GM12878 (cell line): ENCODE measurements at regions of chrX and their contacts with region 1.

Region 1: DNA sequence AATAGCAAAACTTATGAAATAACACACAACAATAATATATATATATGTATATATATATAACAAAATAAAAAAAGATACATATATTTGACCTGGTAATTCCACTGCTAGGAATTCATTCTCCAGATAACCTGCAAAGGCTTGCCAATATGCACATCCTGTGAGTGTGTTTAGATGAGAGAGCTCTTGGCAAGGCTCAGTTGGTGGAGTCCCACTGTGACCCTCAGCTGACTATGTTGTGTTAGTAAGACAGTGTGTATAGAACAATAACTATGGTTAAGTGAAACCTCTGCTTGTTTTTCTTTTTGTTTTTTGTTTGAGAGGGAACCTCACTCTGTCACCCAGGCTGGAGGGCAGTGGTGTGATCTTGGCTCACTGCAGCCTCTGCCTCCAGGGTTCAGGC is 39.5 kb upstream of the RBMX start:
- DNase-seq: no peak
- ATAC-seq: no peak
- H3K4me3 ChIP-seq: no peak overlapping the region
- H3K27ac ChIP-seq: no peak overlapping the region
- H3K4me1 ChIP-seq: no peaks in the 10 kb centered on the region
- H3K27me3 ChIP-seq: no peaks in the 10 kb centered on the region
- CTCF ChIP-seq: no peak
- EP300 ChIP-seq: no peak
- POLR2A ChIP-seq: no peak
- RAD21 ChIP-seq: no peak

Region 2: GRCh38 chrX:136572030-136572429 is 348.0 kb before region 1 on chrX:
- CTCF ChIA-PET with region 1: interaction called, 12 read pairs
- POLR2A ChIA-PET with region 1: no interaction called
- RAD21 ChIA-PET with region 1: no interaction called
- SMC1A ChIA-PET with region 1: interaction called, 4 read pairs
- in situ Hi-C with region 1: no loop called
- intact Hi-C with region 1: loop called (anchors 5 kb)
- DNase-seq: no peak
- ATAC-seq: peak; percentile 72
- H3K4me3 ChIP-seq: no peak overlapping the region
- H3K27ac ChIP-seq: no peak overlapping the region
- H3K4me1 ChIP-seq: no peaks in the 10 kb centered on the region
- H3K27me3 ChIP-seq: no peaks in the 10 kb centered on the region
- CTCF ChIP-seq: peak in 1 of 3 experiments; percentile 40; a peak in 1 of 6 replicates
- EP300 ChIP-seq: no peak
- POLR2A ChIP-seq: no peak
- RAD21 ChIP-seq: peak; percentile 40

Region 3: GRCh38 chrX:136767104-136767941 is 152.7 kb before region 1 on chrX:
- CTCF ChIA-PET with region 1: no interaction called
- POLR2A ChIA-PET with region 1: no interaction called
- RAD21 ChIA-PET with region 1: no interaction called
- SMC1A ChIA-PET with region 1: interaction called, 3 read pairs
- in situ Hi-C with region 1: no loop called
- intact Hi-C with region 1: loop called (anchors 5 kb)
- DNase-seq: no peak
- ATAC-seq: peak; percentile 87
- H3K4me3 ChIP-seq: peak overlapping the region; percentile 68
- H3K27ac ChIP-seq: peak overlapping the region; percentile 58
- H3K4me1 ChIP-seq: peaks cover 10% of the 10 kb centered on the region
- H3K27me3 ChIP-seq: no peaks in the 10 kb centered on the region
- CTCF ChIP-seq: peak in 2 of 3 experiments; percentile 12 to 42; a peak in 2 of 6 replicates
- EP300 ChIP-seq: no peak
- POLR2A ChIP-seq: peak; percentile 75
- RAD21 ChIP-seq: peak; percentile 28; the same call in 1 of the 2 replicates